OCI-LY7 (cell line): ENCODE measurements at regions of chr6 and their contacts with region 1.

Region 1: GRCh38 chr6:142857233-142857761 is 87.7 kb downstream of the HIVEP2 start:
- DNase-seq: peak; percentile 86
- H3K4me3 ChIP-seq: peak overlapping the region; percentile 61
- H3K27ac ChIP-seq: peak overlapping the region; percentile 94
- H3K4me1 ChIP-seq: peaks cover 91% of the 10 kb centered on the region
- CTCF ChIP-seq: no peak

Region 2: GRCh38 chr6:142926494-142927270 is 69.4 kb after region 1 on chr6:
- CTCF ChIA-PET with region 1: no interaction called
- POLR2A ChIA-PET with region 1: interaction called, 3 read pairs
- intact Hi-C with region 1: loop called (anchors 2 kb)
- DNase-seq: peak; percentile 84
- H3K4me3 ChIP-seq: peak overlapping the region; percentile 84
- H3K27ac ChIP-seq: peak overlapping the region; percentile 58
- H3K4me1 ChIP-seq: peaks cover 53% of the 10 kb centered on the region
- CTCF ChIP-seq: no peak